Left ventricle myocardium superior (tissue), 1 donor: ENCODE measurements at regions of chr16 and their contacts with region 1.

Region 1: DNA sequence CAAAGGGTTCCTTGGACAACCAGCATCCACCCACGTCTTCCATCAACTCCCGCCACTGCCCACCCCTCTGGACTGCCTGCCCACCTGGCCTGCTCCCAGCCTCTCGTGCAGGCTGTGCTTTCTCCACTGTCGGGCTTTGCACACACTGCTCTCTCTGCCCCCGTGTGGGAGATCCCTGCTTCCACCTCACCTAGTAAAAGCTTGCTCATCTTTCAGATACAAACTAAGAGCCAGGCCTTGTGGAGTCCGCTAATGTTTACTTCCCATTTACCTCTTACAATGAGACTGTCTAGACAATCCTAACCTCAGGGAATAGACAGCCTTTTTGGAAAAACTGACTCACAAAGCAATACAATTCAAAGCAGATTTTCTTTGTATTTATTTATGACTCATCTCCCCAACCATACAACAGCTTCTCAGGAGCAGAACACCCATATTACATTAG is 67.6 kb downstream of the USP31 start:
- DNase-seq: no peak
- ATAC-seq: peak; percentile 26

Region 2: DNA sequence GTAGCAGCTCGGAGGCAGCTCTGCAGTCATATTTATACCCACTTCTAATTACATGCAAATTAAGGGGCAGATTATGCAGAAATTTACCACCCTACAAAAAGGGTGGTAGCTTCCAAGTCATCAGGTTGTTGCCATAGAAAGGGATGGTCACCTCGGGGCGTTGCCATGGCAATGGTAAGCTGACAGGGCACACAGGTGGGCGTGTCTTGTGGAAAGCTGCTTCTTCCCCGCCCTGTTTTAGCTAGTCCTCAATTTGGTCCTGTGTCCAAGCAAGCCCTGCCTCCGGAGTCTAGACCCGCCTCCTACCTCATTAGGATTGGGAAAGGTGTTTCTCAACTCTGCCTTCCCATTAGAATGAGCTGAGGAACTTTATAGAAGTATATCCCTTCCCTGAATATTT is 169.0 kb before region 1 on chr16:
- intact Hi-C with region 1: no loop called
- DNase-seq: no peak
- ATAC-seq: no peak

Region 3: DNA sequence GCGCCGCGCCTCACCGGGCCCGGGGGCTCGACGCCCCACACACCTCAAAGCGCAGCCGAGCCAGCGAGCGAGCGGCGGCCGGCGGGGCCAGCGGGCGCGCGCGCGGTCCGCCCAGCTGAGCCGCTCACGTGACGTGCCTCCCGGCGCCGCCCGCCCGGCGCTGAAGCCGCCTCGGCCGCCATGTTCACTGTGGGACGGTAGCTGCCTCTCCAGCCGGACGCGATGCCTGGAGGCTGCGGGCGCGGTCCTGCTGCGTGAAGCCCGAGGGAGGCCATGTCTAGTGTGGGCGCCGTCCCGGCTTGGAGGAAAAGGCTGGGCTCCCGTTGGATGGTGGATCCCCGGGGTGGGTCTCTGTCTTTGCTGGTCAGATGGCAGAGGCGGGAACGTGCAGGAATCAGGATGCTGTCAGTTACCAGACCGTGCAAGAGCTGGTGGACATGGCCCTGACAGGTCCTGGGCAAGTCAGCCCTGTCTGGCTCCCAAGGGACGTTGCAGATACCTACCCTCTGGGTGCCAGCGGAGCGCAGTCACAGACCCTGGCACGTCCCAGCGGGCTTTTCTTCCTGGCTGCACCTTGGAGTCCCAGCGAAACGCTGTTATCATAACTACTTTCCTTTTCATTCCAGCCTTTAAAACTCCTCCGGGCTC is 67.8 kb after region 1 on chr16 and contains the start of gene USP31:
- intact Hi-C with region 1: loop called (anchors 10 kb)
- DNase-seq: peak; percentile 98
- ATAC-seq: peak; percentile 97
- total RNA-seq, gene USP31: 25.0 TPM

Region 4: GRCh38 chr16:23195366-23195978 is 113.8 kb after region 1 on chr16:
- intact Hi-C with region 1: no loop called
- DNase-seq: no peak
- ATAC-seq: peak; percentile 71

Region 5: GRCh38 chr16:23771642-23772041 is 689.9 kb after region 1 on chr16:
- intact Hi-C with region 1: no loop called
- DNase-seq: no peak
- ATAC-seq: no peak